ENCODE measurements at regions of chr2 and their contacts with region 1.

Region 1: DNA sequence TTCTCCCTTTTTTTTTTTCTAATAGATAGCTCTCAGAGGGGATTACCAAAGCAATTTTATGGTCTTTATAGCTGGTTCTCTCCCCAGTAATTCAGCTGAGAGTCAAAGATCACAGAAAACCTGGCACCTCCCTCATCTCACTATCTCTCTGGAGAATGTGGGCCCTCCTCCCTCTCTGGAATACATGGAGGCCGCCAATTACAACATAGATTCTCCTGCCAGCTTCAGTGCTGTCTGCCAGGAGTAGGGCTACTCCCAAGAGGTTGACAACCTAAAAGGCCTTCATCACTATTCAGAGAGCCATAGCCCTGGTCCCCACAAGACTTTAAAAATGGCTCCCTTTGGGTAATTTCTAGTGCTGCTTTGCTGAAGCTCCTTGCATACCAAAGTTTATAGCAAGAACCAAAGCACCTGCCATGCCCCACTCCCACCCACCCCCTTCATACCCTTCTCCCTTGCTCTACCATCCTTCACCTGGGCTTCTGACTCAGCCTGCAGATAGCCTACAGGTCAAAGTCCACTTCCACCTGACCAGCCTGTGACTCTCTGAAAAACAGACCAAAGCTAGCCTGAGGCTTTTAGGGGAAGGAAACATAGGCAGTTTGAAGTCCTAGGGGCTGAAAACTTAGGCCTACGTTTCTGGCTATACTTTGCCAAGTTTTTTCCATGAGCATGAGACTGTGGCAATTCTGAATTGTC is 472.3 kb downstream of the TNS1 start:
- DNase-seq: peak; percentile 34 to 63
- H3K4me3 ChIP-seq: no peak overlapping the region
- H3K4me3 Mint-ChIP-seq: no peak overlapping the region
- H3K27ac Mint-ChIP-seq: no peak overlapping the region
- H3K4me1 ChIP-seq: peaks cover 16% of the 10 kb centered on the region
- H3K4me1 Mint-ChIP-seq: peaks cover 19% of the 10 kb centered on the region
- H3K27me3 ChIP-seq: no peaks in the 10 kb centered on the region
- H3K27me3 Mint-ChIP-seq: no peaks in the 10 kb centered on the region
- CTCF ChIP-seq: no peak

Region 2: DNA sequence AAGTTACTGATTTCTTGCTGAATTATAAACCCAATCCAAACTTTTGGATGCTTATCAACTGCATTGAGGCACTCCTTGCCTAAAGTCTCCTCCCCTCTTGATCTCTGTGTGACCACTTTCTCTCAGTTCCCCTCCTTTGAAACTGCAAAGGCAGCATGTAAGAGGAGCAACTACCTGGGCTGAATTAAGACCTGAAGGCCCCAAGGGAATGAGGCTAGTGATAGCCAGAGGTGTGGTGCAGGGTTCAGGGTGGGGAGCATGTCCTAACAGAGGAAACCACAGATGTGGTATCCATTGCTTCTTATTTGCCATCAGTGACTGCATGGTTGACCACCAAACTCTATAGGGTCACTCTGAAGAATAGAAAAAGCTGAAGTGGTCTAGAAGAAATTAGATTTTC is 85.6 kb before region 1 on chr2:
- CTCF ChIA-PET with region 1: no interaction called
- POLR2A ChIA-PET with region 1: no interaction called
- intact Hi-C with region 1: no loop called
- DNase-seq: no peak
- H3K4me3 ChIP-seq: no peak overlapping the region
- H3K4me3 Mint-ChIP-seq: no peak overlapping the region
- H3K27ac Mint-ChIP-seq: no peak overlapping the region
- H3K4me1 ChIP-seq: no peaks in the 10 kb centered on the region
- H3K4me1 Mint-ChIP-seq: no peaks in the 10 kb centered on the region
- H3K27me3 ChIP-seq: no peaks in the 10 kb centered on the region
- H3K27me3 Mint-ChIP-seq: no peaks in the 10 kb centered on the region
- CTCF ChIP-seq: no peak

Region 3: GRCh38 chr2:217551252-217551899 is 20.8 kb after region 1 on chr2:
- CTCF ChIA-PET with region 1: no interaction called
- POLR2A ChIA-PET with region 1: no interaction called
- intact Hi-C with region 1: no loop called
- DNase-seq: peak; percentile 60 to 73
- H3K4me3 ChIP-seq: no peak overlapping the region
- H3K4me3 Mint-ChIP-seq: peak overlapping the region; percentile 21
- H3K27ac Mint-ChIP-seq: peak overlapping the region; percentile 82
- H3K4me1 ChIP-seq: peaks cover 34% of the 10 kb centered on the region
- H3K4me1 Mint-ChIP-seq: peaks cover 41% of the 10 kb centered on the region
- H3K27me3 ChIP-seq: no peaks in the 10 kb centered on the region
- H3K27me3 Mint-ChIP-seq: no peaks in the 10 kb centered on the region
- CTCF ChIP-seq: no peak

Region 4: DNA sequence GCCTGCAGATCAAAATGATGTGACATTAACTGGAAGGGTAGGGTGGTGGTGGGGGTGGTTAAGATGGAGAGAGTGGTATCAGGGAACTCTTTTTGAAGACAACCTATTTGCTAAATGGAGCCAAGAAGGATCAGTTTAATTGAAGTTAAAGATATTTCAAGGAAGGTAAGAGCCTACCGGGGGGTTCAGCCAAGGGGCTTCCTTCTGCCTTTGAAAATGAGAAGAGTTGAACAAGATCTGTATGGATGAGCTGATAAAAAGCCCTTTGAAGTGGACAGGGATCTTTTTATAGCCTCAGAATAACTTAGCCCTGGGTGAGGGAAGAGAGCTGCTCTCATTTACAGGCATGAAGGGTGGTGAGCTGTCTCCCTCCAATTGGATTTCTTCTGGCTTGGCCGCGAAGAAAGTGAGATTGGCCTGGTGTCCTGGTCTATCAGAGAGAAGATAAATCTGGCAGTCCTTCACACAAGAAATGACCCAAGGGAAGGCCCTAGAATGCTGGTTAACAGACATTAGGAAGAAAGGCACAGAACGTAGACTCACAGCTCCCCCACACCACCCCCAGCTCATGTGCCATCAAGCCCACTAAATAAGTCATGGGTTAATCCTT is 32.4 kb after region 1 on chr2:
- CTCF ChIA-PET with region 1: no interaction called
- POLR2A ChIA-PET with region 1: no interaction called
- intact Hi-C with region 1: no loop called
- DNase-seq: no peak
- H3K4me3 ChIP-seq: no peak overlapping the region
- H3K4me3 Mint-ChIP-seq: no peak overlapping the region
- H3K27ac Mint-ChIP-seq: no peak overlapping the region
- H3K4me1 ChIP-seq: no peaks in the 10 kb centered on the region
- H3K4me1 Mint-ChIP-seq: no peaks in the 10 kb centered on the region
- H3K27me3 ChIP-seq: no peaks in the 10 kb centered on the region
- H3K27me3 Mint-ChIP-seq: no peaks in the 10 kb centered on the region
- CTCF ChIP-seq: no peak

Region 5: DNA sequence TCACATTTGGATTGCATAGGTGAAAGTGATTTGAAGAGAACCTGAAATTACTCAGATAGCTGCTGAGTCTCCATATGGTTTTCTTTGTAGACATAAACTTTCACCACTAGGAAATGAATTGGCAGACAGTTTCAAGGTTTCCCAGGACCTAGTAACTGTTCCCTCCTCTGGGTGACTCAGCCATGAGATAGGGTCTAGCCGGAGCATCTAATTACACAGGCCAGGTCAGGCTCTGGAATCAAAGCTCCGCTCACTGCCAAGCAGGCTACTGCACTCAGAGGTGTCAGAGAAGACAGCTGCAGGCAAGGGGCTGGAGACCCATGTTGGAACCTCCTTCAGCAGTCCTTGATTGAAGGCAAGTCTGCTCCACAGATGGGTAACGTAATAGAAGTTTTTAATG is 43.0 kb after region 1 on chr2:
- CTCF ChIA-PET with region 1: no interaction called
- POLR2A ChIA-PET with region 1: no interaction called
- intact Hi-C with region 1: loop called (anchors 2 kb)
- DNase-seq: no peak
- H3K4me3 ChIP-seq: no peak overlapping the region
- H3K4me3 Mint-ChIP-seq: no peak overlapping the region
- H3K27ac Mint-ChIP-seq: no peak overlapping the region
- H3K4me1 ChIP-seq: peaks cover 13% of the 10 kb centered on the region
- H3K4me1 Mint-ChIP-seq: peaks cover 18% of the 10 kb centered on the region
- H3K27me3 ChIP-seq: no peaks in the 10 kb centered on the region
- H3K27me3 Mint-ChIP-seq: peaks cover 2% of the 10 kb centered on the region
- CTCF ChIP-seq: no peak

Measured in Caco-2 (cell line).